Caco-2 (cell line): ENCODE measurements at regions of chr11 and their contacts with region 1.

Region 1: DNA sequence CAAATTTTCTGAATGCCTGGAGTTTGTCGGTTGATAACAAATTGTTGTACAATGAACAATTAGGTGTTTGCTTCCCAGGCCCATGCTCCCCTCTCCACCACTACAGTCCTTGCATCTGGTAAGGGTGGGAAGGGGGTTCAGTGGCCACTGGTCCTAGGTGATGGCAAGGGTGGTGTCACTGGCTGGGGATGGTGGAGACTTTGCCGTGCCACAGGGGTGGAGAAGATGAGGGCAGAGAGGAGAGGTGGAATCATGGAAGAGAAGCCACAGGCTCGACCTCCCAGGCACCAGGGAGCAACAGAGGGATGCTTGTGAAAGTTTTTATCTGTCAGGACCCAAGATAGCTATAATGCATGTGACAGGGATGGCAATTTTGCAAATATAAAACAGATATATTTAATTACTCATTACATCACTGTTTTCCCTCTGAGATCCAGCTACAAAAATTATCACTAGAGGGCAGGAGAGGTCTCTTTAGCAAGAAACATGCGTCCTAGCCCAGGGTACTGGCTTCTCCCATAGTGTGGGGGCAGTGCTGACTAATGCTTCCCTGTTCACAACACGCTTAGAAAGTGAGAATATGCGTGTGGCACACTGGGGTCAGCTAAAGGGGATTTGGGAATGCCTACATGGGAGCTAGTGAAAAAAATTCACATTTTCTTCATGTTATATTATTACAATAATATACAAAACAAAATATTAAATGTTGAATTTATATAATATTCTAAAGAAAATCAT is 49.0 kb upstream of the AMPD3 start:
- DNase-seq: peak; percentile 80 to 84
- H3K4me3 ChIP-seq: no peak overlapping the region
- H3K4me3 Mint-ChIP-seq: no peak overlapping the region
- H3K27ac Mint-ChIP-seq: peak overlapping the region; percentile 74
- H3K4me1 ChIP-seq: peaks cover 14% of the 10 kb centered on the region
- H3K4me1 Mint-ChIP-seq: peaks cover 16% of the 10 kb centered on the region
- H3K27me3 ChIP-seq: no peaks in the 10 kb centered on the region
- H3K27me3 Mint-ChIP-seq: no peaks in the 10 kb centered on the region
- CTCF ChIP-seq: peak; percentile 74 to 81

Region 2: GRCh38 chr11:10450464-10451425 is 44.7 kb after region 1 on chr11:
- CTCF ChIA-PET with region 1: interaction called, 4 read pairs
- POLR2A ChIA-PET with region 1: no interaction called
- intact Hi-C with region 1: loop called (anchors 5 kb)
- DNase-seq: peak; percentile 85 to 88
- H3K4me3 ChIP-seq: peak overlapping the region; percentile 71
- H3K4me3 Mint-ChIP-seq: peak overlapping the region; percentile 95
- H3K27ac Mint-ChIP-seq: peak overlapping the region; percentile 88
- H3K4me1 ChIP-seq: peaks cover 21% of the 10 kb centered on the region
- H3K4me1 Mint-ChIP-seq: peaks cover 14% of the 10 kb centered on the region
- H3K27me3 ChIP-seq: no peaks in the 10 kb centered on the region
- H3K27me3 Mint-ChIP-seq: no peaks in the 10 kb centered on the region
- CTCF ChIP-seq: peak; percentile 75 to 77

Region 3: DNA sequence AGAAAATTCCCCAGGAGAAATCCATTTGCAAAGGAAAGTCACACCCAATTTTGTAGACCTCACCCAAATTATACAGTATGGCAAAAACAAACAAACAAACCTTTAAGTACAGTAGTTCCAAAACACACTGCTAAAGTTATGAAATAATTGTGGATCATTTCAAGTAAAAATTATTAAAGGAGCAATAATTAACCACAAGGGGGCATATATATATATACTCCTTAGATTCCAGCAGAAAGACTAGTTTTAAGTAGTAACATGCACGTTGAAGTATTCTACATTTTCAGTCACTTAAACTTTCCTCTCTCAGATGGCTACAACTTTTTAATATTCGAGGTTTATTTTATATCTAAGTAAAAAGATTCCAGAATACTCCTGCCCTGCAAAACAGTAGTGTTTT is 108.2 kb after region 1 on chr11:
- CTCF ChIA-PET with region 1: interaction called, 6 read pairs
- POLR2A ChIA-PET with region 1: no interaction called
- intact Hi-C with region 1: loop called (anchors 5 kb)
- DNase-seq: no peak
- H3K4me3 ChIP-seq: no peak overlapping the region
- H3K4me3 Mint-ChIP-seq: no peak overlapping the region
- H3K27ac Mint-ChIP-seq: no peak overlapping the region
- H3K4me1 ChIP-seq: no peaks in the 10 kb centered on the region
- H3K4me1 Mint-ChIP-seq: no peaks in the 10 kb centered on the region
- H3K27me3 ChIP-seq: no peaks in the 10 kb centered on the region
- H3K27me3 Mint-ChIP-seq: no peaks in the 10 kb centered on the region
- CTCF ChIP-seq: peak in 1 of 2 experiments; percentile 33